CD8-positive, alpha-beta T cell (primary cell): ENCODE measurements at regions of chr1 and their contacts with region 1.

Region 1: DNA sequence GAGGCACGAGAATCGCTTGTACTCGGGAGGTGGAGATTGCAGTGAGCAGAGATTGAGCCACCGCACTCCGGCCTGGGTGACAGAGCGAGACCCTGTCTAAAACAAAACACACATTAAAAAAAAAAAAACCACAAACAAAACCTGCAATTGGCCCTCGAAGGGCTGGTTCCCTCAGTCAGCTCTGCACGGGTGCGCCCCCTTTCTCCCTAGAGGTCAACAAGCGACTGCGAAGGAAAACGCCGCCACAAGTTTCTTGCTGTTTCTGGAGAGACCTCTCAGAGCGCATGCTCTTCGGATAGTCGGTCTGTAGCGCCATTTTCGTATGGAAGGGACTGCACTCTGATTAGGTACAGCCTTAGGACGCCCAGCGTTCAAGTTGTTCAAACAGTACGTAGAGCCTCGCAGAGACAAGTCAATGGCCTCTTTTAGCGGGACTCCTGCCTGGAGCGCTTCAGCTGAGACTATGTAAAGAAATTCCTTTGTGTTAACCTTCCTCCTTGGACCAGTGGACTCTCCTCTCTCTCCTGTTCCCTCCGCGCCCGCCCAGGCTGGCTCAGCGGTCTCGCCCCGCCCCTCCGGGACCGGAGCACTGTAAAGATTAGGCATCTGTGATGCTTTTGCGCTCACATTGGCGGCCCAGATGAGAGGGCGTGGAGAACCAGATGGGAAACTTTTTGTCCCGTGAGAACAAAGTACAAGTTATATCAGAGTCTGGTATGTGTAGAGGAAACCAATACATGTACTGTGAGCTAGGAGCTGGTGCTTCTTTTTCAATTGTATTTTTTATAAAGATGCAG is 1.0 kb upstream of the CDC14A start:
- DNase-seq: peak; percentile 67 to 94 (median 85)
- ATAC-seq: peak; percentile 70
- H3K4me3 ChIP-seq: peak overlapping the region; percentile 76 to 88
- H3K4me3 Mint-ChIP-seq: peak overlapping the region; percentile 99
- H3K27ac ChIP-seq: peak overlapping the region; percentile 80 to 86
- H3K27ac Mint-ChIP-seq: peak overlapping the region; percentile 99
- H3K4me1 ChIP-seq: peaks cover 25% of the 10 kb centered on the region
- H3K4me1 Mint-ChIP-seq: peaks cover 36% of the 10 kb centered on the region
- H3K27me3 ChIP-seq: no peaks in the 10 kb centered on the region
- H3K27me3 Mint-ChIP-seq: no peaks in the 10 kb centered on the region
- CTCF ChIP-seq: no peak

Region 2: GRCh38 chr1:99808391-99809115 is 542.7 kb before region 1 on chr1:
- CTCF ChIA-PET with region 1: no interaction called
- POLR2A ChIA-PET with region 1: no interaction called
- intact Hi-C with region 1: loop called (anchors 5 to 10 kb)
- DNase-seq: peak in 4 of 9 experiments; percentile 15 to 81 (median 54)
- ATAC-seq: peak; percentile 79
- H3K4me3 ChIP-seq: no peak overlapping the region
- H3K4me3 Mint-ChIP-seq: no peak overlapping the region
- H3K27ac ChIP-seq: no peak overlapping the region
- H3K27ac Mint-ChIP-seq: no peak overlapping the region
- H3K4me1 ChIP-seq: no peaks in the 10 kb centered on the region
- H3K4me1 Mint-ChIP-seq: peaks cover 4% of the 10 kb centered on the region
- H3K27me3 ChIP-seq: peaks cover 0 to 2% of the 10 kb centered on the region in 2 experiments
- H3K27me3 Mint-ChIP-seq: peaks cover 3% of the 10 kb centered on the region
- CTCF ChIP-seq: peak; percentile 85

Region 3: DNA sequence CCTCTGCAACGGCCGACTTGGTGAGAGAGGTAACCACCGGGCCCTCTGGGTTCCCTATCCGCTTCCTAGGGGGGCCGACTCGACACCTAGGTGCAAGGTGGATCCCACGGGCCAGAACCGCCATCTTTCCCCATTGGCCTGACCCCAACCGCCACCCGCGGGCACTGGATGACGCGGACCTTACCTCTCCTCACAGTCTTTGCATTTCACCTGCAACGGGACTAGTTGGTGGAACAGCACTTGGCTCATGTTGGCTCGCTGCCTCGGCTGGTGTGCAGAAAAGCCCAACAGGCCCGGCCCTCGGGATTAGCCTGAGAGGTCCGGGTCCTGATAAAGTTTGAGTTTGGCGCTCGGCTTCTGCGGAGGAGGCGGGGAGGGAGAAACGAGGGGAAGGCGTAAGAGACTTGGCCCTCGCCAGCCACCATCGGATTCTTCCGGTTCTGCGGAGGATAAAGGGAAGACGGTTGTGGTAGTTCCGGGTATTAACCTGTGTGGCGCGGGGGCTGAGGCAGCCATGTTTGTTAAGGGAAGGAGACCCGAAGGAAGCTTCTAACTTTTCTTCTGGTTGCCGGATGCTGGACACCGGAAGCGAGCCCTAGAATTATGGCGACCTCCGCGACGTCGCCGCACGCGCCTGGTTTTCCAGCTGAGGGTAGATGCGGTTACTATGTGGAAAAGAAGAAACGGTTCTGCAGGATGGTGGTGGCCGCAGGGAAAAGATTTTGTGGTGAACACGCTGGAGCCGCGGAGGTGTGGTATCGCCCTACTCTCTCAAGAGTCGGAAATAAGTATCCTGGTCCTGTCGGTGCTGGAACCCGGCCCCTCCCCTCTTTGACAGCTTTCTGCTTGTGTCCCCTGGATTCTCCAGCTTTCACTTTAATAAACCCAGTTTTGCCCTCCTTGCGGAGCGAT is 218.5 kb before region 1 on chr1 and contains the starts of genes SASS6 and TRMT13:
- CTCF ChIA-PET with region 1: no interaction called
- POLR2A ChIA-PET with region 1: no interaction called
- intact Hi-C with region 1: loop called (anchors 1 to 2 kb)
- DNase-seq: peak; percentile 86 to 97 (median 93)
- ATAC-seq: peak; percentile 97
- H3K4me3 ChIP-seq: peak within 1 kb of the TSS; percentile 83
- H3K4me3 Mint-ChIP-seq: peak within 1 kb of the TSS; percentile 99
- H3K27ac ChIP-seq: peak within 1 kb of the TSS; percentile 71 to 72
- H3K27ac Mint-ChIP-seq: peak within 1 kb of the TSS; percentile 98
- H3K4me1 ChIP-seq: peaks cover 14% of the 10 kb centered on the region
- H3K4me1 Mint-ChIP-seq: peaks cover 44% of the 10 kb centered on the region
- H3K27me3 ChIP-seq: no peaks in the 10 kb centered on the region
- H3K27me3 Mint-ChIP-seq: no peaks in the 10 kb centered on the region
- CTCF ChIP-seq: no peak
- total RNA-seq, gene SASS6: 1.2 TPM
- total RNA-seq, gene TRMT13: 6.5 to 7.2 TPM

Region 4: DNA sequence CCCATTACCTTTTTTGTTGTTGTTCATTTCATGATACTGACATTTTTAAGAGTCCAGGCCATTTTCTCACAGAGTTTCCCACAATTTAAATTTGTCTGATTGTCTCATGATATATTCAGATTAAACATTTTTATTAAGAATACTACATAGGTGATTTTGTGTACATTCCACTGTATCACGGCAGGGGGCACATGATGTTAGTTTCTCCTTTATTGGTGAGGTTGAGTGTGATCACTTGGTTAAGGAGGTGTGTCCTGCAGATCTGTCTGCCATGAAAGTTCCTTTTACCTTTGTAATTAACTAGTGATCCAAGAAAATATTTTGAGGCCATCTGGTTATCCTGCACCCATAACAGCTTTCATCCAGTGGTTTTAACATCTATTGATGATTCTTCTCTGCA is 73.4 kb before region 1 on chr1:
- CTCF ChIA-PET with region 1: interaction called, 3 read pairs
- POLR2A ChIA-PET with region 1: no interaction called
- intact Hi-C with region 1: loop called in 1 of 2 experiments (anchors 5 kb)
- DNase-seq: peak in 4 of 9 experiments; percentile 12 to 56 (median 40)
- ATAC-seq: peak; percentile 77
- H3K4me3 ChIP-seq: no peak overlapping the region
- H3K4me3 Mint-ChIP-seq: no peak overlapping the region
- H3K27ac ChIP-seq: no peak overlapping the region
- H3K27ac Mint-ChIP-seq: no peak overlapping the region
- H3K4me1 ChIP-seq: no peaks in the 10 kb centered on the region
- H3K4me1 Mint-ChIP-seq: peaks cover 38% of the 10 kb centered on the region
- H3K27me3 ChIP-seq: no peaks in the 10 kb centered on the region
- H3K27me3 Mint-ChIP-seq: no peaks in the 10 kb centered on the region
- CTCF ChIP-seq: no peak

Region 5: DNA sequence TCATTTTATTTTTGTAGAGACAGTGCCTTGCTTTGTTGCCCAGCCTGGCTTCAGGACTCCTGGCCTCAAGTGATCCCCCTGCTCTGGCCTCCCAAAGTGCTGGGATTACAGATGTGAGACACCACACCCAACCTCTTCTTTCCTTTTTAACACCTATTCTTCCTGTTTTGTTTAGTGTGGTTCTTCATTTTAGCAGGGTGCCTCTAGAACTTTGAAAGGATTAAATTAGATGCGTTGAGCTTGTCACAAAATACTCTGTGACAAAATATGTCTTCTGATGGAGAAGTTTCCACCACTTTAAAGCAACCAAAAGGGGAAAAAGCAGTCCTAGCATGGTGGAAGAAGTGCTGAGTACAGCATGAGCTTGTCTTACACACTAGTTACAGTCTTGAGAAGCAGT is 43.0 kb after region 1 on chr1:
- CTCF ChIA-PET with region 1: interaction called, 16 read pairs
- POLR2A ChIA-PET with region 1: interaction called, 24 read pairs
- intact Hi-C with region 1: loop called (anchors 2 to 5 kb)
- DNase-seq: peak in 2 of 9 experiments; percentile 56 to 62
- ATAC-seq: no peak
- H3K4me3 ChIP-seq: no peak overlapping the region
- H3K4me3 Mint-ChIP-seq: peak overlapping the region; percentile 63
- H3K27ac ChIP-seq: peak overlapping the region; percentile 15 to 80
- H3K27ac Mint-ChIP-seq: peak overlapping the region; percentile 95
- H3K4me1 ChIP-seq: peaks cover 83% of the 10 kb centered on the region
- H3K4me1 Mint-ChIP-seq: peaks cover 94% of the 10 kb centered on the region
- H3K27me3 ChIP-seq: no peaks in the 10 kb centered on the region
- H3K27me3 Mint-ChIP-seq: no peaks in the 10 kb centered on the region
- CTCF ChIP-seq: no peak

Region 6: DNA sequence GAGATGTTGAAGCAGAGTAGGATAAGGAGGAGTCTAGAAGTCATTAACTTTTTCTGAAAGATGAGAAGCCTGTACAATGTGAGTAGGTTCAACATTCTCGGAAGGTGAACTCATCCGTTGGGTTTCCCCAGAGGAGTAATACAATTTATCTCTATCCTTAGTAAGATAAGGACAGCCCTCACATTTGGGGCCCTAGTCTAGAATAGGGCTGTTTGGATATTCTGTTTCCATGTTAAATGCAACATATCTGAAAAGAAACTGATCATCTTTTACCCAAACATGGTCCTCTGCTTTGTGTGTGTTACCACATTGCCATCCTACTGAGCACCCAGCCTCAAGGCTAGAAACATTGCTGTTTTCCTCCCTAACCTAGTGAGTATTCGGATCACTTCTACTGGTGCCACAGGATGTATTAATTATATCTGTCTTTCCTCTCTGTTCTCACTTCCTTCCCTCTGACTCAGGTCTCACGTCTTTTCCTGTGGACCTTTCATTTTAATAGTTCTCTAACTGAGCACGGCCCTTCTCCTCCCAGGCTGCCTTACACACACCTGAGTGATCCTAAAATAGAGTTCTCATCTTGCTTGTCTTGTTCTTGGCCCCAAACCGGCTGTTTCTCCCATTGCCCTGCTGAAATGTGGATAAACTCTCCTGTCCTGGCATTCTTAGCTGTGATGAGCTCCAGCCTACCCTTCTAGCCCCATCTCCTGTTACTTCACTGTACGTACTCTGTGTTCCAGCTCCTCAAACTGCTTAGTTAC is 92.7 kb after region 1 on chr1:
- CTCF ChIA-PET with region 1: interaction called, 4 read pairs
- POLR2A ChIA-PET with region 1: interaction called, 34 read pairs
- intact Hi-C with region 1: loop called in 1 of 2 experiments (anchors 1 kb)
- DNase-seq: peak in 5 of 9 experiments; percentile 18 to 75 (median 39)
- ATAC-seq: peak; percentile 35
- H3K4me3 ChIP-seq: peak overlapping the region in 1 of 2 experiments; percentile 25
- H3K4me3 Mint-ChIP-seq: peak overlapping the region; percentile 71
- H3K27ac ChIP-seq: peak overlapping the region; percentile 73 to 88
- H3K27ac Mint-ChIP-seq: peak overlapping the region; percentile 97
- H3K4me1 ChIP-seq: peaks cover 71% of the 10 kb centered on the region
- H3K4me1 Mint-ChIP-seq: peaks cover 84% of the 10 kb centered on the region
- H3K27me3 ChIP-seq: no peaks in the 10 kb centered on the region
- H3K27me3 Mint-ChIP-seq: no peaks in the 10 kb centered on the region
- CTCF ChIP-seq: no peak

Region 7: DNA sequence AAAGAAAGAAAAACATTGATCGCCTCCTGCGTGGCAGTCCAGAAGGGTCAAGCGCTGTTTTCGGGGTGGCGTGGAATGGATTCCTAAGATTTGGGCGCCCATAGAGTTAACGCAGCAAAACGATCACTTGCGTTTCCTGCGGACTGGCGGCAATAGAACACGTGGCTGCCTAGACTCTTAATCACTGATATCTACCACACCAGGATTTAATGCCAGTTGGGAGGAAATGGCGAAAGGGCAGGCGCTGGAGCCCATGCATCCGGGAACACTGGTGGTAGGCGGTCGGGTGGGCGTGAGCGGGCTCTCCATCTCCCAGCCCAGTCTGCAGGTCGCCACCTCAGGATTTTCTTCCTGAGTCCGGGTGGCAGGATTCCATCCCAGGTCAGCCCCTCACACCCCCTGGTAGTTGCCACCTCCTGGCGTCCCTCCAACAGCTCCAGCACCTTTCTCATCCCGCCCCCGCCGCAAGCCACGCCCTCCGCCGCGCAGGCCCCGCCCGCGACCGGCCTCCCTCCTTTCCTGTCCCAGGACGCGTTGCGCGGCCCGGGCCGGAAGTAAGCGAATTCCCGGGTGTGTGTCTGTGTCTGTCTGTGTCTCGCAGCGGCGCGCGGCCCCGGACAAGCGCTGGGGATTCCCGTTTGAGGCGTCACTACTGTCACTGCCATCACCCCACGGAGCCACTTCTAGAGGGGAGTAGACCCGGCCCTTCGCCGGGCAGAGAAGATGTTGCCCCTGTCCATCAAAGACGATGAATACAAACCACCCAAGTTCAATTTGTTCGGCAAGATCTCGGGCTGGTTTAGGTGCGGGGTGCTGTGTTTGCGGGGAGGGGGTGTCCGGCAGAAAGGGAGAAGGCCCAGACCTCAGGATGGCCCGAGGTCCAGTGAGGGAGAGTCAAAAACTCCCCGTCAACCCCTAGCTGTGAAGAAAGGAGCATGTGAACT is 544.5 kb after region 1 on chr1 and contains the start of gene SLC30A7:
- CTCF ChIA-PET with region 1: no interaction called
- POLR2A ChIA-PET with region 1: no interaction called
- intact Hi-C with region 1: loop called (anchors 2 to 10 kb)
- DNase-seq: peak; percentile 91 to 98 (median 96)
- ATAC-seq: peak; percentile 72
- H3K4me3 ChIP-seq: peak within 1 kb of the TSS; percentile 92 to 98
- H3K4me3 Mint-ChIP-seq: peak within 1 kb of the TSS; percentile 100
- H3K27ac ChIP-seq: peak within 1 kb of the TSS; percentile 85 to 99
- H3K27ac Mint-ChIP-seq: peak within 1 kb of the TSS; percentile 100
- H3K4me1 ChIP-seq: peaks cover 20% of the 10 kb centered on the region
- H3K4me1 Mint-ChIP-seq: peaks cover 49% of the 10 kb centered on the region
- H3K27me3 ChIP-seq: no peaks in the 10 kb centered on the region
- H3K27me3 Mint-ChIP-seq: no peaks in the 10 kb centered on the region
- CTCF ChIP-seq: no peak
- total RNA-seq, gene SLC30A7: 18.8 to 20.2 TPM